BJ (cell line): ENCODE measurements at regions of chr2 and their contacts with region 1.

Region 1: DNA sequence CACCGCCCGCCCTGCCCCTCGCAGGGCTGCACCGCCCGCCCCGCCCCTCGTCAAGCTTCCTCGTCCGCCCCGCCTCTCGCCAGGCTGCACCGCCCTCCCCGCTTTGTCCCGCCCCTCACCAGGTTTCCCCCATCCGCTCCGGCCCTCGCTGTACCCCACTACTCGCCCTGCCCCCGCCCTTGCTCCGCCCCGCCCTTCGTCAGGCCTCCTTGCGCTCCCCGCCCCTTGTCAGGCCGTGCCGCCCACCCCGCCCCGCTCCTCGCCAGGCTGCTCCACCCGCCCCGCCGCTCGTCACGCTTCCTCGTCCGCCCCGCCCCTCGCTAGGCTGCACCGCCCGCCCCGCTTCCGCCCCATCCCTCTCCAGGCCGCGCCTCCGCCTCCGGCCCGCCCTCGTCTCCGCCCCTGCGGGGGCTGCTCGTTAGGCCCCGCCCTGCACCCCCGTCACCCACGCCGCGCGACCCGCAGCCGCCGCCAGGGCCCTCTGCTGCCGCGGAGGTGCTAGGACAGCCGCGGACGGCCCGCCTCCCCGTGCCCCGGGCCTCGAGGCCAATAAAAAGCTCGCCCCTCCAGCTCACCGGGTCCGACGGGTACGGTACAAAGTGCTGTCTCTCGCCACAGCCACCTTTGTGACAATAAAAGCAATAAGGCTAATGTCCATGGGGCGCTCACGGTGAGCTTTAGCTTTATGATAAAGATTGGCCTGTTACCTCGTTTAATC is 574 bp upstream of the DNPEP start:
- DNase-seq: peak; percentile 69
- H3K4me3 ChIP-seq: peak overlapping the region; percentile 42
- H3K27me3 ChIP-seq: no peaks in the 10 kb centered on the region
- CTCF ChIP-seq: peak; percentile 43

Region 2: DNA sequence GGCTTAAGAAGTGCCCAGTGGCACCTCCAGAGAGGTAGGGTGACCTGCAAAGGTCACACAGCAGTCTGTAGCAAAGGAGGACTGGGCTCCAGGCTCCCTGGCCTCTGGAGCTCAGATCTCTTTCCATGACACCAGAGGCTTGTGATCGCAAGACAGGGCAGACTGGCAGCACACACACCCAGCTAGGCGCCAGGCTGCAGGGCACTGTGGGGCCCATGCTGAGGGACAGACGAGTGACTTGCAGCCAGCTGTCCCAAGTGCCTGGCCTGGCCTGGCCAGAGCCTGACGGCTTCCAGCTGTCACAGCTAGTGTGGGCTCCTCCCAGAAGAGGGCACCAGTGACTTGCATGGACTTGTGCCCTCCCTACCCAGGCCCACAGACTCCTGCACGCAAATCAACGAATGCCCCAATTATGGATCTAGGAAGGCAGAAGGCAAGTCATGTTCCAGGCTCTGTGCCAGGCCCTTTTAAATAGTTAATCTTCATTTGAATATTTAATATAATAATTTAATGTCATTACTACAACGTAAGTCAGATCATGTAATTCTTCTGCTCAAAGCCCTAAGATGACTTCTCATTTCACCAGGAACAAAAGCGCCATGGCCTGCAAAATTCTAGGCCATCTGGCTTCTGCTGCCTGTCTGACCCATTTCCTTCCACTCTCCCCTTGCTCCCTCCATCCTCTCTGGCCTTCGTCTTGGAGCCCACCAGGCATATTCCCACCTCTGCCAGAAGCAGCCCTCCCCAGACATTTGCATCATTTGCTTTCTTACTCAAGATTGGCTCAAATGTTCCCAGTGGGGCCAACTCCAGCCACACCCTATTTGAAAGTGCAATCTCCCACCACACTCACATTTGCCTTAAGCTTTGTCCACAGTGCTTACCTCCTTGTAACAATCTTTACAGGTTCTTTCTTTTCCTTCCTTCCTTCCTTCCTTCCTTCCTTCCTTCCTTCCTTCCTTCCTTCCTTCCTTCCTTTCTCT is 42.6 kb after region 1 on chr2:
- CTCF ChIA-PET with region 1: interaction called, 3 read pairs
- POLR2A ChIA-PET with region 1: interaction called, 12 read pairs
- DNase-seq: no peak
- H3K4me3 ChIP-seq: no peak overlapping the region
- H3K27me3 ChIP-seq: 0 out of 2 replicates have a peak, but pooled peaks cover 2% of the 10 kb centered on the region
- CTCF ChIP-seq: peak; percentile 35; the same call in 1 of the 2 replicates

Region 3: DNA sequence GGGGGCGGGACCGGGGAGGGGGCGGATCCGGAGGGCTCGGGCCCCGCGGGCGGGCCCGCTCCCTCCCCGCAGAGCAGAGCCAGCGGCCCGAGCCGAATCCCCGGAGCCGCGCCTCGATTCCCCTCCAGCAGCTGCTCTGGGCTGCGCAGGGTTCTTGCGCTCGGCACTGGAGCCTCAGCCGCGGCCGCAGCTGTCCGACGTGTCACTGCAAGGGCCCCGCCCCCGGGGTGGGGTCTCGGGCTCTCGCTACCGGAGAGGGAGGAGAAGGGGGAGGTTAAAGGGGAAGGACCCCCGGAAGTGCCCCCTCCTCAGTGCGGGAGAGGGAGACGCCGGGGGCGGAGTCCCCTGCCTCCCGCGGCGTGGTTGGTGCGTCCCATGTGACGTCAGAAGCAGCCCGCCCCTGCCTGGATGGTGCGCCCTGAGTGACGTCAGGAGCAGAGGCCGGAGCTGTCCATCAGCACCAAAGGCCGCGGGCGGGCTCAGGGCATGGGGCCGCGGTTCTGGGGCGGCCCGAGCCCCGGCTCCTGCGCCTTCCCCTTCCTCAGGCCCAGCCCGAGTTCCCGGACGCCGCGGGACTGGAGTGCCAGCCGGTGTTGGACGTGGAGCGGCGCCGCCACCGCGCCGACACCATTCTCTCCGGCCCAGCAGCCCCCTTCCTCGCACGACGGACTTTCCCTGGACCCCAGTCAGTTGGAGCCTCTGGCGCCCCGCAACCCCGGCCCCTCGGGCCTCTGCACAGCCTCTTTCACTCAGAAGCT is 155.5 kb after region 1 on chr2 and contains the starts of genes CHPF and TMEM198:
- CTCF ChIA-PET with region 1: interaction called, 10 read pairs
- POLR2A ChIA-PET with region 1: no interaction called
- DNase-seq: peak; percentile 86
- H3K4me3 ChIP-seq: peak within 1 kb of the TSS; percentile 84
- H3K27me3 ChIP-seq: no peaks in the 10 kb centered on the region
- CTCF ChIP-seq: no peak
- polyA plus RNA-seq, gene CHPF: 65.0 and 119 TPM in 2 replicates
- polyA plus RNA-seq, gene TMEM198: 2.5 and 4.0 TPM in 2 replicates